Naive thymus-derived CD4-positive, alpha-beta T cell (primary cell): ENCODE measurements at regions of chr6 and their contacts with region 1.

Region 1: GRCh38 chr6:127725821-127726220 is 148.8 kb downstream of the C6orf58 start:
- DNase-seq: no peak
- ATAC-seq: no peak
- H3K4me3 ChIP-seq: no peak overlapping the region
- H3K4me3 Mint-ChIP-seq: no peak overlapping the region
- H3K27ac ChIP-seq: no peak overlapping the region
- H3K27ac Mint-ChIP-seq: peak overlapping the region in 6 of 9 donors; percentile 33 to 82 (median 56)
- H3K4me1 ChIP-seq: peaks cover 0 to 5% of the 10 kb centered on the region in 2 donors
- H3K4me1 Mint-ChIP-seq: peaks cover 5 to 94% (median 70%) of the 10 kb centered on the region in 7 donors
- H3K27me3 ChIP-seq: no peaks in the 10 kb centered on the region
- H3K27me3 Mint-ChIP-seq: no peaks in the 10 kb centered on the region

Region 2: DNA sequence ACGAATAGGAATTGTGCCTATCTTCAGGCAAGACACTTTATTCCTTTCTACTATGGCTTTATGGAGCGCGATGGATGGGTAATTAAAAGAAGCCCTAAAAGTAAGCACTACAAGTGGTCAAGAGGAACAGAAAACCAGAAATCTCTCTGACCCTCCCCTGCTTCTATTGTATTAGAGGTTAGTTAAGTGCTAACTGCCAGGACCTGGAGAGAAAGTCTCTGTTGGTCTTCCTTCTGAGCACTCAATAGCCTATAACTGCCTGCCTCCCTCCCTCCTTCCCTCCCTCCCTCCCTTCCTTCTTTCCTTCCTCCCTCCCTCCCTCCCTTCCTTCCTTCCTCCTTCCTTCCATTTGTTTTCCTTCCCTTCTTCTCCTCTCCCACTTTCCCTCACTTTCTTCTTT is 15.2 kb before region 1 on chr6:
- CTCF ChIA-PET with region 1: no interaction called
- POLR2A ChIA-PET with region 1: interaction called, 3 read pairs
- intact Hi-C with region 1: loop called in 1 of 2 experiments (anchors 2 kb)
- DNase-seq: no peak
- ATAC-seq: no peak
- H3K4me3 ChIP-seq: no peak overlapping the region
- H3K4me3 Mint-ChIP-seq: no peak overlapping the region
- H3K27ac ChIP-seq: no peak overlapping the region
- H3K27ac Mint-ChIP-seq: peak overlapping the region in 3 of 9 donors; percentile 34 to 80 (median 63)
- H3K4me1 ChIP-seq: no peaks in the 10 kb centered on the region
- H3K4me1 Mint-ChIP-seq: peaks cover 5 to 33% (median 10%) of the 10 kb centered on the region in 7 donors
- H3K27me3 ChIP-seq: no peaks in the 10 kb centered on the region
- H3K27me3 Mint-ChIP-seq: no peaks in the 10 kb centered on the region

Region 3: DNA sequence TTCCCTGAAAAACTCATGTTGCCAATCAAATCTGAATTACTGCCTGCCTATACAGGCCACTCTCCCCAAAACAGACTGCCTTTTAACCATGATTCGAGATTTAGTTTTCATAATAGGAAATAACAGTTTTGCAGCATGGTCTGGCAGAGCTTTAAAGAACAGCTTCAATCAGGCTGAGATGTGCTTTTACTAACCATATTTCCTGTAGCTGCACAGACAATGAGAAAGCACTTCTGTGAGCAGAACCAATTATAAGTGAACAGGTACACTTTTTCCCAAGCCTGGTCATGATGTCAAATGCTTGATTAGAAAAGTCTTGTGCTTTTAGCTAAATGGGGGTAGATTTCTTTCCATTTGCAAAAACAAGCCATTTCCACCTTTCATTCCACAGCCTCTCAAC is 66.8 kb after region 1 on chr6:
- CTCF ChIA-PET with region 1: no interaction called
- POLR2A ChIA-PET with region 1: no interaction called
- intact Hi-C with region 1: no loop called
- DNase-seq: peak in 7 of 9 donors; percentile 44 to 70 (median 60)
- ATAC-seq: peak; percentile 83
- H3K4me3 ChIP-seq: peak overlapping the region; percentile 3
- H3K4me3 Mint-ChIP-seq: peak overlapping the region in 8 of 10 donors; percentile 14 to 80 (median 54)
- H3K27ac ChIP-seq: peak overlapping the region; percentile 43
- H3K27ac Mint-ChIP-seq: peak overlapping the region in 8 of 9 donors; percentile 22 to 90 (median 78)
- H3K4me1 ChIP-seq: peaks cover 34 to 43% of the 10 kb centered on the region in 2 donors
- H3K4me1 Mint-ChIP-seq: peaks cover 45 to 100% (median 92%) of the 10 kb centered on the region in 7 donors
- H3K27me3 ChIP-seq: no peaks in the 10 kb centered on the region
- H3K27me3 Mint-ChIP-seq: no peaks in the 10 kb centered on the region